ENCODE measurements at regions of chr1 and their contacts with region 1.

Region 1: GRCh38 chr1:6579374-6580118 is at the start of gene ZBTB48:
- DNase-seq: peak; percentile 93 to 98 (median 95)
- ATAC-seq: peak; percentile 97 to 98
- H3K4me3 Mint-ChIP-seq: peak within 1 kb of the TSS; percentile 91 to 99 (median 96)
- H3K27ac Mint-ChIP-seq: peak within 1 kb of the TSS; percentile 88 to 99 (median 97)
- H3K4me1 Mint-ChIP-seq: peaks cover 9 to 44% (median 39%) of the 10 kb centered on the region in 4 donors
- H3K27me3 Mint-ChIP-seq: no peaks in the 10 kb centered on the region
- polyA plus RNA-seq, gene ZBTB48: 9.8 to 30.0 (median 28.7) TPM

Region 2: GRCh38 chr1:6001992-6002576 is 577.5 kb before region 1 on chr1:
- POLR2A ChIA-PET with region 1: no interaction called
- DNase-seq: peak in 6 of 10 donors; percentile 22 to 46 (median 32)
- ATAC-seq: peak; percentile 53 to 78
- H3K4me3 Mint-ChIP-seq: peak overlapping the region in 1 of 10 donors; percentile 75
- H3K27ac Mint-ChIP-seq: peak overlapping the region in 6 of 10 donors; percentile 34 to 84 (median 56)
- H3K4me1 Mint-ChIP-seq: peaks cover 27 to 73% (median 52%) of the 10 kb centered on the region in 4 donors
- H3K27me3 Mint-ChIP-seq: no peaks in the 10 kb centered on the region

Region 3: GRCh38 chr1:6554031-6554906 is 25.3 kb before region 1 on chr1 and contains the start of gene NOL9:
- POLR2A ChIA-PET with region 1: interaction called, 13 read pairs
- DNase-seq: peak; percentile 91 to 96 (median 95)
- ATAC-seq: peak; percentile 98
- H3K4me3 Mint-ChIP-seq: peak within 1 kb of the TSS; percentile 71 to 87 (median 78)
- H3K27ac Mint-ChIP-seq: peak within 1 kb of the TSS; percentile 61 to 89 (median 82)
- H3K4me1 Mint-ChIP-seq: peaks cover 0 to 28% (median 17%) of the 10 kb centered on the region in 4 donors
- H3K27me3 Mint-ChIP-seq: no peaks in the 10 kb centered on the region
- polyA plus RNA-seq, gene NOL9: 10.4 to 19.4 (median 18.5) TPM

Measured in naive thymus-derived CD8-positive, alpha-beta T cell (primary cell).